ENCODE measurements at regions of chr3 and their contacts with region 1.

Region 1: DNA sequence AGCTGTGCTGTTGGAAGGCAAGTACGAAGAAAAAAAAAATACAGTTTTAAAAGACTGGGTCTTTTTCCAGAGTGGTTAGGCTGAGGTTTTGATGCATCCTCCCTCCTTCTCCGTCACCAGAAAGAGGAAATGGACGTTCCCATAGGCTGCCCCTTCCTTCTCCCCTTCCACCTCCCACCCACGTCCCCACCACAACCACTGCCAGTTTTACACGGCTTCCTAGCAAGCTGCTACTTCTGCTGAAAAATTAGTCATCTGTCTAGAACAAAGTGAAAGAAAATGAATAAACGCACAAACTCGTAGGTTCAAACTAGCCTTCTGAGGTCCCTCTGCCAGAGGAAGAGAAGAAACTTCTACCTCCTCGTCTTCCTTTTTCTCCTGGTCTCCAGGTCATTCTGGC is 71.6 kb upstream of the RPL35A start:
- DNase-seq: no peak
- ATAC-seq: no peak
- H3K4me3 ChIP-seq: no peak overlapping the region
- H3K4me3 Mint-ChIP-seq: no peak overlapping the region
- H3K27ac ChIP-seq: peak overlapping the region in 1 of 2 donors; percentile 32
- H3K27ac Mint-ChIP-seq: peak overlapping the region; percentile 56
- H3K4me1 ChIP-seq: no peaks in the 10 kb centered on the region
- H3K4me1 Mint-ChIP-seq: peaks cover 6% of the 10 kb centered on the region
- H3K27me3 ChIP-seq: no peaks in the 10 kb centered on the region
- H3K27me3 Mint-ChIP-seq: no peaks in the 10 kb centered on the region
- CTCF ChIP-seq: no peak

Region 2: GRCh38 chr3:197847866-197848401 is 30.5 kb before region 1 on chr3:
- CTCF ChIA-PET with region 1: no interaction called
- POLR2A ChIA-PET with region 1: no interaction called
- intact Hi-C with region 1: loop called (anchors 1 kb)
- DNase-seq: peak; percentile 73
- ATAC-seq: peak; percentile 95
- H3K4me3 ChIP-seq: peak overlapping the region in 4 of 5 experiments; percentile 10 to 42 (median 30)
- H3K4me3 Mint-ChIP-seq: peak overlapping the region; percentile 79
- H3K27ac ChIP-seq: peak overlapping the region; percentile 71 to 85
- H3K27ac Mint-ChIP-seq: peak overlapping the region; percentile 91
- H3K4me1 ChIP-seq: peaks cover 9 to 11% of the 10 kb centered on the region in 2 donors
- H3K4me1 Mint-ChIP-seq: peaks cover 18% of the 10 kb centered on the region
- H3K27me3 ChIP-seq: no peaks in the 10 kb centered on the region
- H3K27me3 Mint-ChIP-seq: no peaks in the 10 kb centered on the region
- CTCF ChIP-seq: no peak

Region 3: GRCh38 chr3:197866035-197866434 is 12.4 kb before region 1 on chr3:
- CTCF ChIA-PET with region 1: no interaction called
- POLR2A ChIA-PET with region 1: no interaction called
- intact Hi-C with region 1: no loop called
- DNase-seq: no peak
- ATAC-seq: no peak
- H3K4me3 ChIP-seq: no peak overlapping the region
- H3K4me3 Mint-ChIP-seq: no peak overlapping the region
- H3K27ac ChIP-seq: no peak overlapping the region
- H3K27ac Mint-ChIP-seq: no peak overlapping the region
- H3K4me1 ChIP-seq: no peaks in the 10 kb centered on the region
- H3K4me1 Mint-ChIP-seq: no peaks in the 10 kb centered on the region
- H3K27me3 ChIP-seq: no peaks in the 10 kb centered on the region
- H3K27me3 Mint-ChIP-seq: no peaks in the 10 kb centered on the region
- CTCF ChIP-seq: no peak